ENCODE measurements at regions of chr17 and their contacts with region 1.

Region 1: DNA sequence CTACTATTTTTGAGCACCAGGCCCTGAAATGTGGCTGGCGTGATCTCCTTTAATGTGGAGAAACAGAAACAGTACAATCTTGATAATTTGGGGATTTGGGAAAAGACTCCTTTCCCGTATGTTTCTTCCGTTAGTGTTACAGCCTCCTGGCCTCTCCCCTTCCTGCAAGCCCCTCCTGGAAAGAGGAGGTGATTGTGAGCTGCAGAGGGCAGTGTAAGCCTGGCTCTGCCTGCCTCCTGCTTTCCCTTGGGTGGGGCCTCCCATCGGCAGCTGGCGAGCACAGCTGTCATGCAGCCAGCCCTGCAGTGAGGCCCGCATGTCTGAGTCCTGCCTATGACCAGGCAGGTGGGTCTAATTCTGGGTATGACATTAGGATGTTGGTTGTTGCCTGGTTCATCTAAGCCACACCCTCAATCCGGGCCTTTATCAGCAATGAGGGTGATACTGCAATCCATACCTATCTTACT is 48.7 kb upstream of the WSB1 start:
- DNase-seq: peak; percentile 85
- H3K4me3 ChIP-seq: no peak overlapping the region
- H3K27ac ChIP-seq: peak overlapping the region; percentile 80 to 84 (median 82)
- H3K4me1 ChIP-seq: peaks cover 23 to 67% (median 29%) of the 10 kb centered on the region in 4 donors
- H3K27me3 ChIP-seq: no peaks in the 10 kb centered on the region
- CTCF ChIP-seq: peak; percentile 57 to 86 (median 63)
- EP300 ChIP-seq: no peak
- POLR2A ChIP-seq: no peak

Region 2: DNA sequence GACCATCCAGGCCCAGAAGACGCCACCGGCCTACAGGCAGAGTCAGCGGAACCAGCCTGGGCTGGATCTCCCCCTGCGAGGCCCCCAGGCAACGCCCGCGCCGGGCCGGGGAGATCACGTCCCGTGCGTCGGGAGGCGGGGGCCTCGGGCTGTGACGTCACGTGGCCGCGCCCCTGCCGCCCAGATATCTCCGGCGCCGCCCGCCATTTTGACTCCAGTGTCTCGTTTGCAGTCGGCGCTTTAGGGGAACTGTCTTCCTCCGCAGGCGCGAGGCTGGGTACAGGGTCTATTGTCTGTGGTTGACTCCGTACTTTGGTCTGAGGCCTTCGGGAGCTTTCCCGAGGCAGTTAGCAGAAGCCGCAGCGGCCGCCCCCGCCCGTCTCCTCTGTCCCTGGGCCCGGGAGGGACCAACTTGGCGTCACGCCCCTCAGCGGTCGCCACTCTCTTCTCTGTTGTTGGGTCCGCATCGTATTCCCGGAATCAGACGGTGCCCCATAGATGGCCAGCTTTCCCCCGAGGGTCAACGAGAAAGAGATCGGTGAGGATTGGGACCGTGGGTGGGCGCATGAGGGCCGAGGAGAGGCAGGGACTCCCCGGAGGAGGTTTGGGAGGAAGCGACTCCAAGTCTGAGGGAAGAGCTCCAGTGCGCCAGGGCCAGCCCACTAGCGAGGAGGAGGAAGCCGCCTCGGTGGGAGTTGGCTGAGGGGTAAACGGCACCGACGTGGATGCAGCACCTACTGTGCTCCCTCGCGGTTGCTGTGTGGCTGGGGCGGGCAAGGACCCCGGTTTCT is 48.8 kb after region 1 on chr17 and contains the start of gene WSB1:
- in situ Hi-C with region 1: loop called in 1 of 4 experiments (anchors 5 kb)
- intact Hi-C with region 1: no loop called
- DNase-seq: peak; percentile 94
- H3K4me3 ChIP-seq: peak within 1 kb of the TSS; percentile 52 to 97 (median 75)
- H3K27ac ChIP-seq: peak within 1 kb of the TSS; percentile 99 to 100 (median 99)
- H3K4me1 ChIP-seq: peaks cover 34 to 41% (median 34%) of the 10 kb centered on the region in 4 donors
- H3K27me3 ChIP-seq: no peaks in the 10 kb centered on the region
- CTCF ChIP-seq: no peak
- EP300 ChIP-seq: peak; percentile 57
- POLR2A ChIP-seq: peak; percentile 99
- total RNA-seq, gene WSB1: 90.4 to 335 (median 261) TPM

Region 3: GRCh38 chr17:27332485-27333409 is 87.5 kb after region 1 on chr17:
- in situ Hi-C with region 1: loop called in 3 of 4 experiments (anchors 5 to 10 kb)
- intact Hi-C with region 1: loop called (anchors 2 kb)
- DNase-seq: peak; percentile 98
- H3K4me3 ChIP-seq: peak overlapping the region in 3 of 4 donors; percentile 44 to 67 (median 46)
- H3K27ac ChIP-seq: peak overlapping the region; percentile 88 to 95 (median 90)
- H3K4me1 ChIP-seq: peaks cover 5 to 18% (median 16%) of the 10 kb centered on the region in 4 donors
- H3K27me3 ChIP-seq: no peaks in the 10 kb centered on the region
- CTCF ChIP-seq: peak; percentile 77 to 97 (median 86)
- EP300 ChIP-seq: peak; percentile 33
- POLR2A ChIP-seq: no peak

Region 4: GRCh38 chr17:27455914-27456680 is 210.8 kb after region 1 on chr17 and contains the start of gene KSR1:
- in situ Hi-C with region 1: loop called in 1 of 4 experiments (anchors 25 kb)
- intact Hi-C with region 1: no loop called
- DNase-seq: peak; percentile 89
- H3K4me3 ChIP-seq: peak within 1 kb of the TSS; percentile 78 to 88 (median 84)
- H3K27ac ChIP-seq: peak within 1 kb of the TSS; percentile 77 to 89 (median 84)
- H3K4me1 ChIP-seq: peaks cover 6 to 28% (median 19%) of the 10 kb centered on the region in 4 donors
- H3K27me3 ChIP-seq: peaks cover 11% of the 10 kb centered on the region
- CTCF ChIP-seq: peak in 2 of 5 experiments; percentile 18
- EP300 ChIP-seq: no peak
- POLR2A ChIP-seq: peak; percentile 41
- total RNA-seq, gene KSR1: 8.2 to 55.7 (median 30.9) TPM

Measured in transverse colon (tissue), 4 donors.